Heart left ventricle (tissue), 16 donors: ENCODE measurements at regions of chr10 and their contacts with region 1.

Region 1: GRCh38 chr10:113506476-113506875 is 46.4 kb upstream of the HABP2 start:
- DNase-seq: no peak
- ATAC-seq: no peak
- H3K4me3 ChIP-seq: no peak overlapping the region
- H3K27ac ChIP-seq: no peak overlapping the region
- H3K4me1 ChIP-seq: no peaks in the 10 kb centered on the region
- H3K27me3 ChIP-seq: no peaks in the 10 kb centered on the region
- CTCF ChIP-seq: no peak
- POLR2A ChIP-seq: no peak

Region 2: DNA sequence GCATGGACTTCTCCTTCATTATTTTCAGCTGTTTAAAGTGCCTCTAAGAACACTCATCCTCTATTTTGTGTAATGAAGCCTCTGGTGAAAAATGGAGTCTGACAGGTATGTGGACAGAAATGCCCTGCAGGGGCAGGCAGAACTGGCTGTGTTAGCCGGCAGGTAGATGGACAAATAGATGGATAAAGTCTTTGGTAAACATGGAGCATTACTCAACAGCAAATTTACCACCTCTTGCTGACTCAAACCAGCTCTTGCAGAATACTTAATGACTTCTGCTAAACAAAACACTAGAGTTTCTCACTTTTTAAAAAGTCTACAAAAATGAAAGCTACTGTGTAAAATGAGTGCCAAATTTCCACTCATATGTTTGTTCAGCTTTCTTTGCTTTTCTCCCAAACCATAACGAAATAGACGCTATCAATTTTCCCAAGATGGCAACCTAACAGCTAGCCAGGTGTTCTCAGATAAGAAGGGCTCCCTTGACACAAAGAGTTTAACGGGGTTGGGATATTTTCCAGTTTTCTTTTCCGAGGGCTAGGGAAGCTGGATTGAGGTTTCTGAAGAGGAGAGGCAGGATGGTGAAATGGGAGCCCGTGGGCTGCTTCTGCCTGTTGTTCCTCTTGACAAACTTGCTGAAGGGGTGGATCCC is 25.5 kb before region 1 on chr10:
- intact Hi-C with region 1: loop called in 1 of 10 experiments (anchors 2 kb)
- DNase-seq: no peak
- ATAC-seq: peak in 1 of 4 donors; percentile 21
- H3K4me3 ChIP-seq: no peak overlapping the region
- H3K27ac ChIP-seq: peak overlapping the region in 1 of 12 donors; percentile 35
- H3K4me1 ChIP-seq: peaks cover 0 to 7% (median 0%) of the 10 kb centered on the region in 12 donors
- H3K27me3 ChIP-seq: no peaks in the 10 kb centered on the region
- CTCF ChIP-seq: no peak
- POLR2A ChIP-seq: no peak